ENCODE measurements at regions of chr13 and their contacts with region 1.

Region 1: GRCh38 chr13:112587212-112587763 is 665 bp downstream of the TUBGCP3 start:
- DNase-seq: peak; percentile 74
- ATAC-seq: peak; percentile 87
- H3K4me3 ChIP-seq: peak overlapping the region; percentile 91
- H3K27ac ChIP-seq: peak overlapping the region; percentile 96
- H3K4me1 ChIP-seq: peaks cover 18% of the 10 kb centered on the region
- H3K27me3 ChIP-seq: no peaks in the 10 kb centered on the region
- CTCF ChIP-seq: 0 out of 2 replicates have a peak, but pooled peaks have one; percentile 14

Region 2: DNA sequence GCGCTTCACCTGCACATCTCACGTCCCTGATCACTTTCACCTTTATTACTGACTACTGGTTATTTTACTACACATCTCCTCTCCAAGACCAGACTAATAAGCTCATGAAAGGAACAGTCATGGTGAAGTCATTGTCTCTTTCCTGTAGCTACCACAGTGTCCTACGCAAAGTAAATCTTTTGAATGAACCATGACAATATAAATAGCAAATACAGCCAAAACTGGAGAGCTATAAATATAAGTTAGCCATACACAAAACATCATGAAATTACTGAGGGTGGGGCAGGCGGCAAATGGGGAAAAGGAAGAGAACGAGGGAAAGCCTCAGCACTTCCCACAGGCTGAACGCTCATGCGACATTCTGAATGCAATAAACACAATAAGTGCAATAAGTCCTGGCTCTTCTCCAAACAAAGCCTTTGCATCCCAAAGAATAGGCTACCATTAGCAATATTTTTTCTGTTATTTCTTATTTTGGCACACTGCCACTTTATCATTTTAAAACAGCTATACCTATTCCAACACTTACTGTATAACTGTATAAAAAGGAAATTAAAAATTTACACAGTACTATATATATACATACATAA is 61.8 kb before region 1 on chr13:
- CTCF ChIA-PET with region 1: no interaction called
- POLR2A ChIA-PET with region 1: no interaction called
- intact Hi-C with region 1: loop called (anchors 5 kb)
- DNase-seq: peak; percentile 79
- ATAC-seq: peak; percentile 94
- H3K4me3 ChIP-seq: no peak overlapping the region
- H3K27ac ChIP-seq: peak overlapping the region; percentile 59
- H3K4me1 ChIP-seq: peaks cover 24% of the 10 kb centered on the region
- H3K27me3 ChIP-seq: no peaks in the 10 kb centered on the region
- CTCF ChIP-seq: no peak

Region 3: DNA sequence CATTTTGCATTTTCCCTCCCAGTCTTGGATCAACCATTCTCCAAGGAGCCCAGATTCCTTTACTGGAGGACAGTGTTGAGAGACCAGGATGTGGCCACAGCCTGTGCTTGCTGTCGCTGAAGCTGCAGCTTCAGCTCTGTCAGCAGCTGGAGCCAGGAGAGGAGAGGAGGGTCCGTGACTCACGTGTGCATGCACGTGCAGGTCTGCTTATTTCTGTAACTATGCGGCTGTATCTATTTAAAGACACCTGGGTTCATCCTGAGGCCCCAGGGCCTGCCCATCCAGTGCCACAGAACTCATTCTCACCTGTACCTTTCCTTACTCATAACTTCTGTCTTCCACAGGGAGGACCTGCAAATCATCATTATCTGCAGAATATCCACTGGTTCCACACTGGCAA is 701.6 kb after region 1 on chr13:
- CTCF ChIA-PET with region 1: no interaction called
- POLR2A ChIA-PET with region 1: no interaction called
- intact Hi-C with region 1: no loop called
- DNase-seq: no peak
- ATAC-seq: no peak
- H3K4me3 ChIP-seq: no peak overlapping the region
- H3K27ac ChIP-seq: no peak overlapping the region
- H3K4me1 ChIP-seq: no peaks in the 10 kb centered on the region; the same call in 1 of the 2 replicates
- H3K27me3 ChIP-seq: no peaks in the 10 kb centered on the region
- CTCF ChIP-seq: no peak

Region 4: GRCh38 chr13:113390874-113391497 is 803.7 kb after region 1 on chr13:
- CTCF ChIA-PET with region 1: no interaction called
- POLR2A ChIA-PET with region 1: no interaction called
- intact Hi-C with region 1: no loop called
- DNase-seq: no peak
- ATAC-seq: no peak
- H3K4me3 ChIP-seq: no peak overlapping the region
- H3K27ac ChIP-seq: no peak overlapping the region
- H3K4me1 ChIP-seq: peaks cover 10% of the 10 kb centered on the region
- H3K27me3 ChIP-seq: no peaks in the 10 kb centered on the region
- CTCF ChIP-seq: no peak

Measured in PC-3 (cell line).